Sigmoid colon (tissue), 7 donors: ENCODE measurements at regions of chr4 and their contacts with region 1.

Region 1: DNA sequence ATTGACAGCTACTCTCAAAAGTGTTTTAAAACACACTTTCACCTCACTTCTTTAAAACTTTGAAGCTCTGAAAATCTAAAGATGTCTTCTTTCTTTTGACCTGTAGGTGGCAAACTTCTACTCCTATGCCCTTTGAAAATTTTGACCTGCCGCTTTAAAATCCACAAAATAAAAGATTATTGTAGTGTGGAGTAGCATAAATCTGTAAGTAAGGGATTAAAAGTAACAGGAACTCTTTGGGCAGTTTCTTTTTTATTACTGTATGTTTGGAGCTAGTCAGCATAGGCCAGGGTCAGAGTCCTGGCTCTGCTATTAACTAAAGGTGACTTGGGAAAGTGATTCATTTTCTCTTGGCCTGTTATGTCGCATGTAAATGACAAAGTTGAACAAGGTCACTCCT is 25.5 kb downstream of the BBS12 start:
- DNase-seq: no peak
- H3K4me3 ChIP-seq: no peak overlapping the region
- H3K27ac ChIP-seq: no peak overlapping the region
- H3K4me1 ChIP-seq: no peaks in the 10 kb centered on the region
- H3K27me3 ChIP-seq: no peaks in the 10 kb centered on the region
- CTCF ChIP-seq: peak; percentile 48 to 73 (median 66)
- EP300 ChIP-seq: no peak
- POLR2A ChIP-seq: no peak

Region 2: GRCh38 chr4:122562449-122562848 is 195.6 kb before region 1 on chr4:
- intact Hi-C with region 1: no loop called
- DNase-seq: no peak
- H3K4me3 ChIP-seq: no peak overlapping the region
- H3K27ac ChIP-seq: no peak overlapping the region
- H3K4me1 ChIP-seq: no peaks in the 10 kb centered on the region
- H3K27me3 ChIP-seq: no peaks in the 10 kb centered on the region
- CTCF ChIP-seq: no peak
- EP300 ChIP-seq: no peak
- POLR2A ChIP-seq: no peak

Region 3: GRCh38 chr4:122689972-122690371 is 68.1 kb before region 1 on chr4:
- intact Hi-C with region 1: no loop called
- DNase-seq: no peak
- H3K4me3 ChIP-seq: no peak overlapping the region
- H3K27ac ChIP-seq: no peak overlapping the region
- H3K4me1 ChIP-seq: peaks cover 0 to 16% (median 10%) of the 10 kb centered on the region in 4 donors
- H3K27me3 ChIP-seq: no peaks in the 10 kb centered on the region
- CTCF ChIP-seq: no peak
- EP300 ChIP-seq: no peak
- POLR2A ChIP-seq: no peak

Region 4: DNA sequence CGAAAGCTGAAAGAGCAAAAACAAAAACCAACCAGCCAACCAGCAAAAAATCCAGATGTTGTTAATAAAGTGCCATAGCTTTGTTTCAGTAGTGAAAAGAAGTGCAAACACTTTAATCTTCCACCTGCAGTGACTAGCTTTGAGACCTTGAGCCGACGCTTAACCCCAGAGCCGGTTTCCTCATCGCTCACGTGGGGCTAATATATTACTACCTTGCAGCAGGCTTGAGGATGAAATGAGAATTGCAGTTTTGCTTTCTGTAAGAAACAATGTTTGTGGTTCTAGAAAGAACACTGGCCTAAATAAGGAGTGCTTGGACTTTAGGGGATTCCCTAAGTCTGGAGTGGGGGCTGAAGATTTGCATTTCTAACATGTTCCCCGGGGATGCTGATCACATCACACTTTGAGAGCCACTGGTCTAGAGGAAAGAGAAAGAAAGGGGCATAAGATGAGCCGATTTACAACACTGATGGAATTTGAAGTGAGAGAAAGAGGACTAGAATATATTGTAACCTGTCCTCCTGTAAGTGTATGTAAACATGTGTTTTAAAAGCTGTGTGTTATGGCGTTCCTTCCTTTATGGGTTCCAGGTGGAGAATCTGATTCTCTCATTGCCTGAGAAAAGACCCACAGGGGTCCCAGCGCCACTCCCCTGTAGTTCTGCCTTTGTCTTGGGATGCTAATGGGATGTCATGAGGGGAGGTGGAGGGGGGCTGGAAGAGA is 70.0 kb after region 1 on chr4:
- intact Hi-C with region 1: loop called (anchors 2 kb)
- DNase-seq: peak; percentile 82
- H3K4me3 ChIP-seq: peak overlapping the region; percentile 78 to 88 (median 85)
- H3K27ac ChIP-seq: peak overlapping the region; percentile 93 to 95 (median 94)
- H3K4me1 ChIP-seq: peaks cover 0 to 58% (median 52%) of the 10 kb centered on the region in 4 donors
- H3K27me3 ChIP-seq: no peaks in the 10 kb centered on the region
- CTCF ChIP-seq: peak; percentile 33 to 69 (median 38)
- EP300 ChIP-seq: no peak
- POLR2A ChIP-seq: peak in 1 of 2 donors; percentile 25

Region 5: GRCh38 chr4:122914292-122914904 is 156.4 kb after region 1 on chr4:
- intact Hi-C with region 1: loop called (anchors 2 kb)
- DNase-seq: no peak
- H3K4me3 ChIP-seq: no peak overlapping the region
- H3K27ac ChIP-seq: no peak overlapping the region
- H3K4me1 ChIP-seq: peaks cover 0 to 11% (median 6%) of the 10 kb centered on the region in 4 donors
- H3K27me3 ChIP-seq: no peaks in the 10 kb centered on the region
- CTCF ChIP-seq: peak; percentile 26 to 55 (median 44)
- EP300 ChIP-seq: no peak
- POLR2A ChIP-seq: no peak

Region 6: DNA sequence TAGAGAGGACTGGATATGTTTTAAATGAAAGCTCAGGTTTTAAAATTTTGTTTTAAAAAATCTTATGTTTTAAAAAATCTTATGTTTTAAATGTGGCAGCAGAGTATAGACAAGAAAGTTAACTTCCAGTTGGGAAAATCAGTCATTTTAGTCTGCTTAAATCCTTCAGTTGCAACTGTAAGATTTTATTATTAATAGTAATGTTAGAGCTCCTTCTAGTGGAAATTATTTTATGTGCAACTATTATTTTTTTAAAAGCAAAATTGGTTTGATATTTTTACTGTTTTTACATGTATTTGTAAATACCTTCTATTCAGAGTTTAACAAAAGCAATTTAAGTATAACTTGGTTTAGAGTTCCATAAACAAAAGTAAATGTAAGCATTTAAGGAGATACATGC is 172.8 kb after region 1 on chr4:
- intact Hi-C with region 1: loop called (anchors 5 kb)
- DNase-seq: no peak
- H3K4me3 ChIP-seq: no peak overlapping the region
- H3K27ac ChIP-seq: no peak overlapping the region
- H3K4me1 ChIP-seq: no peaks in the 10 kb centered on the region
- H3K27me3 ChIP-seq: no peaks in the 10 kb centered on the region
- CTCF ChIP-seq: peak in 3 of 4 experiments; percentile 29 to 64 (median 33)
- EP300 ChIP-seq: no peak
- POLR2A ChIP-seq: no peak